Common myeloid progenitor, CD34-positive (primary cell): ENCODE measurements at regions of chr1 and their contacts with region 1.

Region 1: DNA sequence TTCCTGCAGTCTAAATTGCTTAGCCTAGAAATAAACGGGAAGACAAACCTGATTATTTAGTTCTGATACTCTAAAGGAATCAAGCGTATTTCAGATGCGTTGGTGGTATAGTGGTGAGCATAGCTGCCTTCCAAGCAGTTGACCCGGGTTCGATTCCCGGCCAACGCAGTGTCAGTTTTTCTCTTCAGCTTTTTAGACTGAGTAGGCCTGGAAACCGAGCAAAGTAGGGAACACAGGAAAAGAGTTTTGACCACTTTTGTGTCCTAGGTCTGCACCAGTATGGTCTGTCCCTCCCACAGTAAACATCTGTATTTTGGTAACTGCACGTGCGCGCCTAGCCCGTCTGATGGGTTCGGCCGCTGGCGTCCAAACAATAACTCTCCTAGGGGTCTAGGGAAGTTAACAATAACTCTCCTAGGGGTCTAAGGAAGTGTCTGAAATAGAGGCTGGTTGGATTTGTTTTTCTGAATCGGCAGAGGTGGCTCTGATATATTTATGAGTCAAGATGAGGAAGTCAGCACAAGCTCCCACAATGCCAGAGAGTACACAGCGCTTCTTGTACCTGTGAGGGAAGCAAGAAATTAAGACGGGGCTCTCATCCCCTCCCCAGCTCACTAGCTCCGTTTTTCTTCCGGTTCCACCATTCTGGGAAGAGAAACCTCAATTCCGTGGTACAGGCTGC is 15.6 kb upstream of the HJV start:
- DNase-seq: peak; percentile 84 to 90 (median 90)
- H3K4me3 ChIP-seq: peak overlapping the region; percentile 64 to 99 (median 94)
- H3K27ac ChIP-seq: peak overlapping the region; percentile 67 to 89
- H3K4me1 ChIP-seq: peaks cover 3 to 25% (median 15%) of the 10 kb centered on the region in 4 experiments
- H3K27me3 ChIP-seq: no peaks in the 10 kb centered on the region

Region 2: GRCh38 chr1:146019231-146020057 is 17.7 kb before region 1 on chr1:
- CTCF ChIA-PET with region 1: interaction called, 17 read pairs
- POLR2A ChIA-PET with region 1: no interaction called
- DNase-seq: no peak
- H3K4me3 ChIP-seq: peak overlapping the region in 5 of 7 experiments; percentile 8 to 32 (median 23)
- H3K27ac ChIP-seq: no peak overlapping the region
- H3K4me1 ChIP-seq: peaks cover 0 to 12% (median 10%) of the 10 kb centered on the region in 4 experiments
- H3K27me3 ChIP-seq: peaks cover 4 to 42% (median 26%) of the 10 kb centered on the region in 5 experiments

Region 3: GRCh38 chr1:146049436-146049835 is 12.3 kb after region 1 on chr1:
- CTCF ChIA-PET with region 1: interaction called, 39 read pairs
- POLR2A ChIA-PET with region 1: interaction called, 54 read pairs
- DNase-seq: no peak
- H3K4me3 ChIP-seq: no peak overlapping the region
- H3K27ac ChIP-seq: no peak overlapping the region
- H3K4me1 ChIP-seq: peaks cover 0 to 6% (median 3%) of the 10 kb centered on the region in 4 experiments
- H3K27me3 ChIP-seq: no peaks in the 10 kb centered on the region